ENCODE measurements at regions of chr1 and their contacts with region 1.

Region 1: GRCh38 chr1:173429471-173430402 is 47.4 kb upstream of the PRDX6 start:
- DNase-seq: peak; percentile 80
- H3K4me3 ChIP-seq: no peak overlapping the region
- H3K27me3 ChIP-seq: no peaks in the 10 kb centered on the region
- CTCF ChIP-seq: peak; percentile 69

Region 2: GRCh38 chr1:173476664-173477285 is 47.0 kb after region 1 on chr1:
- CTCF ChIA-PET with region 1: interaction called, 12 read pairs
- POLR2A ChIA-PET with region 1: no interaction called
- DNase-seq: no peak
- H3K4me3 ChIP-seq: peak overlapping the region; percentile 82
- H3K27me3 ChIP-seq: no peaks in the 10 kb centered on the region
- CTCF ChIP-seq: no peak